ENCODE measurements at regions of chr6 and their contacts with region 1.

Region 1: GRCh38 chr6:31216208-31216898 is 45.9 kb upstream of the POU5F1 start:
- DNase-seq: no peak
- ATAC-seq: no peak
- H3K4me3 ChIP-seq: no peak overlapping the region
- H3K27ac ChIP-seq: no peak overlapping the region
- H3K4me1 ChIP-seq: no peaks in the 10 kb centered on the region
- H3K27me3 ChIP-seq: no peaks in the 10 kb centered on the region
- CTCF ChIP-seq: no peak

Region 2: DNA sequence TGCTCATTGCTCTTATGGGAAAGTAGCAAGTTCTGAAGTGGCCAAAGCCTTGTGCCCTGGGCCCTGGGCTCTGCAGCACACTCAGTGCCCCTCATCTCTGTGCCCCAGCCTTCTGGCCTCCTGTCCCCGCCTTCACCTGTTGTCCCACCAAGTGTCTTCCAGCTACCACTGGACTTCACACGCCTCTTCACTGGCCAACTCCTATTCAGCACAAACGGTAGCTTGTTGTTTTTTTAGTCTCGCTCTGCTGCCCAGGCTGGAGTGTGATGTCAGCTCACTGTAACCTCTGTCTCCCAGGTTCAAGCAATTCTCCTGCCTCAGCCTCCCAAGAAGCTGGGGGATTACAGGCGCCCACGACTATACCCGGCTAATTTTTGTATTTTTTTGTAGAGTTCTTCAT is 63.6 kb before region 1 on chr6:
- CTCF ChIA-PET with region 1: no interaction called
- POLR2A ChIA-PET with region 1: interaction called, 17 read pairs
- in situ Hi-C with region 1: no loop called
- intact Hi-C with region 1: no loop called
- DNase-seq: no peak
- ATAC-seq: no peak
- H3K4me3 ChIP-seq: no peak overlapping the region
- H3K27ac ChIP-seq: no peak overlapping the region
- H3K4me1 ChIP-seq: peaks cover 4% of the 10 kb centered on the region; the same call in 1 of the 2 replicates
- H3K27me3 ChIP-seq: no peaks in the 10 kb centered on the region
- CTCF ChIP-seq: no peak

Region 3: DNA sequence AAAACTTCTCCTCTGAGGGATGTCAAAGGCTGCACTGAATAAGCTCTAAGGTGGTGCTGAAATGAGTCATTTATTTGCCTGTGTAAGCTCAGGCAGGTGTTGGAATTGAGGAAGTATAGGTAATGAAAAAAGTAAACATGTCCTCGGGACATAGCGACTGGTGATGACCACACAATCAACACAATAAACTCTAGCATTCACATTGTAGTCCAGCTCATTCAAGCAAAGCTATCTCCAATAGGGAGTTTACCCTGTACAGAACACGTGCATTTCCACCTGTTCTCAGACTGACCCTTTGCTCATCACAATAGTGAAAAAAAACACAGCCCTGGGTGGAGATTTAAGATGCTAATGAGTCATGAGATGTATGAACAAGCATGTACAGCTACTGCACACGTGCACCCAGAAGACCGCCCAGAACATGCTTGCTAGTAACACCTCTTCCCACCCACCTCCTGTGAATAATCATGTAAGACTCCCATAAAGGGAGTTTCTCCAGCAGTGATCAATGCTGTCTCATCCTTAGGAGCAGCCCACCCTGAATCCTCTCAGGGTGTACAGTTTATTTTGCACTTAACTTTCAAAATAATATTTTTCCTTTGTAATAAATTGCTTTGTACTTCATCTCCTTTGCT is 12.9 kb before region 1 on chr6:
- CTCF ChIA-PET with region 1: interaction called, 19 read pairs
- POLR2A ChIA-PET with region 1: no interaction called
- in situ Hi-C with region 1: no loop called
- intact Hi-C with region 1: no loop called
- DNase-seq: peak; percentile 76
- ATAC-seq: peak; percentile 64
- H3K4me3 ChIP-seq: peak overlapping the region; percentile 42 to 76
- H3K27ac ChIP-seq: peak overlapping the region; percentile 91
- H3K4me1 ChIP-seq: peaks cover 13% of the 10 kb centered on the region
- H3K27me3 ChIP-seq: no peaks in the 10 kb centered on the region
- CTCF ChIP-seq: no peak

Measured in Panc1 (cell line).